ENCODE measurements at regions of chr2 and their contacts with region 1.

Region 1: GRCh38 chr2:230942920-230943896 is 18.2 kb upstream of the GPR55 start:
- DNase-seq: peak; percentile 65
- H3K4me3 Mint-ChIP-seq: peak overlapping the region; percentile 9
- H3K27ac Mint-ChIP-seq: peak overlapping the region; percentile 22
- H3K4me1 Mint-ChIP-seq: peaks cover 10% of the 10 kb centered on the region
- H3K27me3 Mint-ChIP-seq: peaks cover 30% of the 10 kb centered on the region

Region 2: GRCh38 chr2:230924470-230925341 is 18.5 kb before region 1 on chr2 and contains the start of gene GPR55:
- intact Hi-C with region 1: loop called (anchors 1 kb)
- DNase-seq: peak; percentile 76
- H3K4me3 Mint-ChIP-seq: peak within 1 kb of the TSS; percentile 66
- H3K27ac Mint-ChIP-seq: peak within 1 kb of the TSS; percentile 82
- H3K4me1 Mint-ChIP-seq: peaks cover 42% of the 10 kb centered on the region
- H3K27me3 Mint-ChIP-seq: peaks cover 24% of the 10 kb centered on the region
- total RNA-seq, gene GPR55: 0.23 and 0.38 TPM in 2 replicates

Region 3: GRCh38 chr2:230956827-230957755 is 13.9 kb after region 1 on chr2:
- intact Hi-C with region 1: loop called (anchors 2 kb)
- DNase-seq: peak; percentile 69
- H3K4me3 Mint-ChIP-seq: peak overlapping the region; percentile 83
- H3K27ac Mint-ChIP-seq: peak overlapping the region; percentile 77
- H3K4me1 Mint-ChIP-seq: peaks cover 22% of the 10 kb centered on the region
- H3K27me3 Mint-ChIP-seq: peaks cover 75% of the 10 kb centered on the region

Region 4: GRCh38 chr2:230981704-230982103 is 38.5 kb after region 1 on chr2:
- intact Hi-C with region 1: loop called (anchors 5 kb)
- DNase-seq: no peak
- H3K4me3 Mint-ChIP-seq: no peak overlapping the region
- H3K27ac Mint-ChIP-seq: no peak overlapping the region
- H3K4me1 Mint-ChIP-seq: peaks cover 33% of the 10 kb centered on the region
- H3K27me3 Mint-ChIP-seq: peaks cover 34% of the 10 kb centered on the region

Measured in activated CD4-positive, alpha-beta T cell treated with anti-CD3 and anti-CD28 coated beads, Interleukin-2, amount 10 ng/mL, durations not matched to agents 24 days and 14 days (primary cell).